ENCODE measurements at regions of chr11 and their contacts with region 1.

Region 1: DNA sequence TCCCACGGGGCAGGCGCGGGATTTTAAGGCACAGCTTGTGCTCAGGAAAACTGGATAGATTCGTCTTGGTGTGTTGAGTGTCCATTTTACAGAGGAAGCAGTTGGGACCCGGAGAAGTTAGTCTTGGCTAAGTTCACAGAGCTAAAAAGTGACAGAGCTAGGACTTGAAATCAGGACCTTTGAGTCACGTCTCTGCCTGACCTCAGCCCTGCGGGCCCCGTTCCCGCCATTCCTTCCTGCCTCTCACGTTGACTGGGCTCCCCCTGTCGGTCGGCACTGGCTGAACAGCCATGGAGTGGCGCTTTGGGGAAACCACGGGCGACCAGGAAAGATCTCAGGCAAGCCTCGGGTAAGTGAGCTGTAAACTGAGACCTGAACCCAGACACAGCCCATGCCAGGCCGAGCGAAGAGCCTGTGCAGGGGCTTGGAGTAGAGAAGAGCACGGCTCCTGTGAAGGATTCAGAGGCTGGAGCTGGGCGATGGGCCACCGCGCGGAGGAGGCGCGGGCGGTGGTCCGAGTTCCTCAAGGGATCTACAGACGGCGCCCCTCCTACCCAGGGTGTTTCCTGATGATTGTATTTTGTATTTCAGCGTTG is 54.1 kb downstream of the WNT11 start:
- DNase-seq: peak; percentile 58 to 83 (median 63)
- H3K4me3 ChIP-seq: peak overlapping the region; percentile 31
- H3K4me3 Mint-ChIP-seq: peak overlapping the region; percentile 74 to 87 (median 78)
- H3K27ac ChIP-seq: no peak overlapping the region
- H3K27ac Mint-ChIP-seq: peak overlapping the region in 7 of 8 donors; percentile 29 to 94 (median 81)
- H3K4me1 ChIP-seq: peaks cover 26% of the 10 kb centered on the region
- H3K4me1 Mint-ChIP-seq: peaks cover 30 to 34% (median 32%) of the 10 kb centered on the region in 3 donors
- H3K27me3 ChIP-seq: no peaks in the 10 kb centered on the region
- H3K27me3 Mint-ChIP-seq: peaks cover 0 to 3% of the 10 kb centered on the region in 2 donors

Region 2: DNA sequence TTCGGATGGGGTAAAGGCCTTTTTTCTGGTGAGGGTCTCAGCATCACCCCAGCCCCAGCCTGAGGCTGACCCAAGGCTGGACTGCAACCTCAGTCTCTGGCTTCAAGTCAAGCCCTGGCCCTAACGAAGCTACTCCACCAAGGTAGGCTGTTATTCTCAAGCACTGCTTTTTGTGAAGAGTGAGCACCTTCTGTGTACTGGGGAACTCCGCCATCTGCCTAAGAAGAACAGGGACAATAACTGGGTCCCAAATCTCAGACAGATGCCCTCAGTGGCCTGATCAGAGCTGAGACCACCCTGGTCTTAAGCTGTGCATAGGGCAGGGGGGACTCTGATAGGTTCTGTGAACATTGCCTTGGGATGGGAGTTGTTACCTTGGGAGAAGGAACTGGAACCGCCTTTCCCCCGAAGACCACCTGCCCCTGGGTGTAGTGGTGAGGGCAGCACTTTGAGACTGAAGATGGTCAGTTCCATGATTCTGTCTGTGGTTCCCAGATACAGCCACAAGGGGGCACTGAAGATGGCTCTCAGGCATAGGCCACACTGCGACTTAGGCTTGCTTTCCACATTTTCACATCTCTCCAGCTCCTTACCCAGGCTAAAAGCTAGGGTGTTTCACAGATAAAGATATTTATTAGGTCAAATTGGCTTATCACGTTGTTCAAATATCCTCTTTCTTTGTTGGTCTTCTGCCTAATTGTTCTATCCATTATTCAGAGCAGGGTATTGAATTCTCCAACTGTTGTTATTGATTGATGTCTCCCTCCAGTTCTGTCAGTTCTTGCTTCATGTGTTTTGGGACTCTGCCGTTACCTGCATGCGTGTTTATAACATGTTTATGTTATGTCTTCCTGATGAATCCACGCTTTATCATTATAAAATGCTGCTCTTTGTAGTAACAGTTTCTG is 349.0 kb before region 1 on chr11:
- CTCF ChIA-PET with region 1: interaction called, 10 read pairs
- POLR2A ChIA-PET with region 1: no interaction called
- DNase-seq: peak; percentile 47 to 77 (median 56)
- H3K4me3 ChIP-seq: no peak overlapping the region
- H3K4me3 Mint-ChIP-seq: no peak overlapping the region
- H3K27ac ChIP-seq: no peak overlapping the region
- H3K27ac Mint-ChIP-seq: no peak overlapping the region
- H3K4me1 ChIP-seq: peaks cover 12% of the 10 kb centered on the region
- H3K4me1 Mint-ChIP-seq: peaks cover 6 to 14% (median 9%) of the 10 kb centered on the region in 3 donors
- H3K27me3 ChIP-seq: no peaks in the 10 kb centered on the region
- H3K27me3 Mint-ChIP-seq: peaks cover 2 to 3% of the 10 kb centered on the region in 2 donors

Region 3: GRCh38 chr11:75896843-75897419 is 255.3 kb before region 1 on chr11:
- CTCF ChIA-PET with region 1: interaction called, 44 read pairs
- POLR2A ChIA-PET with region 1: no interaction called
- DNase-seq: peak in 2 of 5 donors; percentile 16 to 26
- H3K4me3 ChIP-seq: no peak overlapping the region
- H3K4me3 Mint-ChIP-seq: no peak overlapping the region
- H3K27ac ChIP-seq: no peak overlapping the region
- H3K27ac Mint-ChIP-seq: no peak overlapping the region
- H3K4me1 ChIP-seq: no peaks in the 10 kb centered on the region
- H3K4me1 Mint-ChIP-seq: peaks cover 0 to 4% (median 0%) of the 10 kb centered on the region in 3 donors
- H3K27me3 ChIP-seq: no peaks in the 10 kb centered on the region
- H3K27me3 Mint-ChIP-seq: no peaks in the 10 kb centered on the region

Region 4: GRCh38 chr11:75903276-75903675 is 248.9 kb before region 1 on chr11:
- CTCF ChIA-PET with region 1: interaction called, 44 read pairs
- POLR2A ChIA-PET with region 1: no interaction called
- DNase-seq: no peak
- H3K4me3 ChIP-seq: no peak overlapping the region
- H3K4me3 Mint-ChIP-seq: no peak overlapping the region
- H3K27ac ChIP-seq: no peak overlapping the region
- H3K27ac Mint-ChIP-seq: peak overlapping the region in 1 of 8 donors; percentile 69
- H3K4me1 ChIP-seq: no peaks in the 10 kb centered on the region
- H3K4me1 Mint-ChIP-seq: peaks cover 9 to 13% (median 13%) of the 10 kb centered on the region in 3 donors
- H3K27me3 ChIP-seq: no peaks in the 10 kb centered on the region
- H3K27me3 Mint-ChIP-seq: no peaks in the 10 kb centered on the region

Region 5: DNA sequence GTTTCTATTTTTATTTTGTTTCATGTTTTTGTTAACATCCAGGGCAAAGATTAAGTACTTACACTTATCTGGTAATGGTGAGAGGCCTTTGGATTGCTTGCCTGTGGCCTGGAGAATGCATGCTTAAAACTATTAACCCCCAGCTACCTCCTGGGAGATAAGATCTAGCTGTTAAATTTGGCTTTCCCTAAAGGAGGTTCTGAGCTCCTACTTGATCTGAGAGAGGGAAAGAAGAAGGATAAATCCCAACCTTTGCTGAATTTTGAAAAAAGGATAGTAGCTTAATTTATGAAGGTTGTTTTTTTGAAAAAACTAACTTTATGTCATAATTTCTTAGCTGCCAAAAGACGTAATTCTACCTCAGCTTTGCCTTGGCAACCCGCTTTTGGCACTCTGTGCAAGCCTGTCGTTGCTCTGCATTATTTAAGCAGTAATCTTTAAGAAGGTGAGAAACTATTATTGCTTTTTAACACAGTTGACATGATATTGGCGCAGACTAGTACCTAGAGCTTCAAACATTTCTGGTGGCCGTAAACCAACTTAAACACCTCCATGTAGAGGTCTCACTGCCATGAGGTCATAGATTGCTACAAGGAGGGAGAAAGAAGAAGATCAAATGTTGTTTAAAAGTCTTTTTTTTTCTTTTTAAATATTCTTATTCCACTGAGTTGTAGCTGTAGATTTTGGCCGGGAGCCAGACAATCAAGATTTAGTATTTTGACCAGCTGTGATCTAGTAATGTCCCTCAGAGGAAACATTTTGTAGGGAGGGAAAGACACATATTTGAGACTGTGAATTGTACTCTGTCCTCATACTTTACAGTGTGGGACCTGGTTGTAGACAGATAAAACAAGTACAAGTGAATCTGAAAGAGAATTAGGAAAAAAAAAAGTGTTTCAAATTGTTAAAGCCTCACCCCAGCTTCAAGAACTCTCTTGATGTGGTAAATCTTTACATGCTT is 20.2 kb before region 1 on chr11:
- CTCF ChIA-PET with region 1: interaction called, 12 read pairs
- POLR2A ChIA-PET with region 1: no interaction called
- DNase-seq: no peak
- H3K4me3 ChIP-seq: no peak overlapping the region
- H3K4me3 Mint-ChIP-seq: no peak overlapping the region
- H3K27ac ChIP-seq: no peak overlapping the region
- H3K27ac Mint-ChIP-seq: no peak overlapping the region
- H3K4me1 ChIP-seq: peaks cover 16% of the 10 kb centered on the region
- H3K4me1 Mint-ChIP-seq: peaks cover 14 to 31% (median 22%) of the 10 kb centered on the region in 3 donors
- H3K27me3 ChIP-seq: no peaks in the 10 kb centered on the region
- H3K27me3 Mint-ChIP-seq: no peaks in the 10 kb centered on the region

Region 6: DNA sequence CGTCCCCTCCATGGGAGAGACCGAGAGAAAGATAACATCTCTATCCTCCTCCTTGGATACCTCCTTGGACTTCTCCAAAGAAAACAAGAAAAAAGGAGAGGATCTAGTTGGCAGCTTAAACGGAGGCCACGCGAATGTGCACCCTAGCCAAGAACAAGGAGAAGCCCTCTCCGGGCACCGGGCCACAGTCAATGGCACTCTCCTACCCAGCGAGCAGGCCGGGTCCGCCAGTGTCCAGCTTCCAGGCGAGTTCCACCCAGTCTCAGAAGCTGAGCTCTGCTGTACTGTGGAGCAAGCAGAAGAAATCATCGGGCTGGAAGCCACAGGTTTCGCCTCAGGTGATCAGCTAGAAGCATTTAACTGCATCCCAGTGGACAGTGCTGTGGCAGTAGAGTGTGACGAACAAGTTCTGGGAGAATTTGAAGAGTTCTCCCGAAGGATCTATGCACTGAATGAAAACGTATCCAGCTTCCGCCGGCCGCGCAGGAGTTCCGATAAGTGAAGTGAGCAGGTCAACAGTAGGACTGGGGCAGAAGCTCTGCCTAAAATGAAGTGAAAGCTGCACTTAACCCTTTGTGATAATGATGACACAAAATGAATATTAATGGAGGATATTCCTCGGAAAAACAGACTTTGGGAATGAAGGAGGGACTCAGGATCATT is 11.1 kb before region 1 on chr11:
- CTCF ChIA-PET with region 1: interaction called, 13 read pairs
- POLR2A ChIA-PET with region 1: no interaction called
- DNase-seq: no peak
- H3K4me3 ChIP-seq: no peak overlapping the region
- H3K4me3 Mint-ChIP-seq: no peak overlapping the region
- H3K27ac ChIP-seq: no peak overlapping the region
- H3K27ac Mint-ChIP-seq: no peak overlapping the region
- H3K4me1 ChIP-seq: no peaks in the 10 kb centered on the region
- H3K4me1 Mint-ChIP-seq: peaks cover 0 to 4% (median 0%) of the 10 kb centered on the region in 3 donors
- H3K27me3 ChIP-seq: no peaks in the 10 kb centered on the region
- H3K27me3 Mint-ChIP-seq: no peaks in the 10 kb centered on the region

Measured in CD8-positive, alpha-beta memory T cell (primary cell).